Left cardiac atrium (tissue), 4 donors: ENCODE measurements at regions of chr12 and their contacts with region 1.

Region 1: DNA sequence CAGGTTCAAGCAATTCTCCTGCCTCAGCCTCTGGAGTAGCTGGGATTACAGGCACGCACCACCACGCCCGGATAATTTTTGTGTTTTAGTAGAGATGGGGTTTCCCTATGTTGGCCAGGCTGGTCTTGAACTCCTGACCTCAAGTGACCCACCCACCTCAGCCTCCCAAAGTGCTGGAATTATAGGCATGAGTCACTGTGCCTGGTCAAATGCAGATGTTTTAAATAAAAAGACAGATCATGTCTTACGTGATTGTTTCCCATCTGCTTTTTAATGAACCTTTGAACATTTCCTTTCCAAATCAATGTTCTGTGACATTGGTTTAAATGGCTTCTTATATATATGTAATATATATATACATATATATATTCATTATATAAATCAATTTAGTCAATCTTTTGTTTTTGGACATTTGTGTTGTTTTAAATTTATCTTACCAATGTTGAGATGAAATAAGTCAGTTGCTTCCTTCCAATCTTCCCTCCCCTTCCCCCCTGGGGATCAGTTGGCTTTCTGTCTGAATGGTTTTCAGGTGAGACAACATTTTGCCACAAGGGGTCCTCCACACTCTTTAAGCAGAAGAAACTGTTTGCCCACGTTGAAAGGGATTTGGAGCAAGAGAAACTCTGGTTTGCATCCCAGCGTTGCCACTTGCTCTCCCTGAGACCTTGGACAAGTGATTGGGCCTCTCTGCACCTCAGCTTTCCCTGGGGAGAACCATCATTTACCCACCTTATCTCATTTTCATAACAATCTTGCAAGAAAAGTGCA is 47.6 kb upstream of the RBM19 start:
- DNase-seq: no peak
- ATAC-seq: no peak

Region 2: GRCh38 chr12:114131824-114132223 is 118.1 kb after region 1 on chr12:
- intact Hi-C with region 1: loop called (anchors 5 kb)
- DNase-seq: no peak
- ATAC-seq: no peak